ENCODE measurements at regions of chr21 and their contacts with region 1.

Region 1: GRCh38 chr21:33199516-33200217 is 30.1 kb upstream of the IFNAR2 start:
- DNase-seq: no peak
- H3K4me3 ChIP-seq: peak overlapping the region in 1 of 8 donors; percentile 2
- H3K27ac ChIP-seq: peak overlapping the region in 7 of 8 donors; percentile 28 to 85 (median 73)
- H3K4me1 ChIP-seq: peaks cover 12 to 74% (median 34%) of the 10 kb centered on the region in 6 donors
- H3K27me3 ChIP-seq: no peaks in the 10 kb centered on the region
- CTCF ChIP-seq: peak; percentile 78 to 94 (median 91)
- POLR2A ChIP-seq: no peak

Region 2: GRCh38 chr21:32826329-32827167 is 373.1 kb before region 1 on chr21:
- intact Hi-C with region 1: loop called (anchors 5 kb)
- DNase-seq: no peak
- H3K4me3 ChIP-seq: no peak overlapping the region
- H3K27ac ChIP-seq: no peak overlapping the region
- H3K4me1 ChIP-seq: no peaks in the 10 kb centered on the region
- H3K27me3 ChIP-seq: peaks cover 0 to 9% (median 0%) of the 10 kb centered on the region in 7 donors
- CTCF ChIP-seq: peak; percentile 10 to 72 (median 44)
- POLR2A ChIP-seq: no peak

Region 3: GRCh38 chr21:32940079-32941014 is 259.3 kb before region 1 on chr21:
- intact Hi-C with region 1: loop called (anchors 5 kb)
- DNase-seq: no peak
- H3K4me3 ChIP-seq: no peak overlapping the region
- H3K27ac ChIP-seq: no peak overlapping the region
- H3K4me1 ChIP-seq: peaks cover 0 to 11% (median 0%) of the 10 kb centered on the region in 6 donors
- H3K27me3 ChIP-seq: peaks cover 0 to 17% (median 0%) of the 10 kb centered on the region in 7 donors
- CTCF ChIP-seq: peak; percentile 38 to 88 (median 71)
- POLR2A ChIP-seq: no peak

Region 4: GRCh38 chr21:33011462-33011861 is 188.2 kb before region 1 on chr21:
- intact Hi-C with region 1: no loop called
- DNase-seq: no peak
- H3K4me3 ChIP-seq: no peak overlapping the region
- H3K27ac ChIP-seq: peak overlapping the region in 2 of 8 donors; percentile 48 to 52
- H3K4me1 ChIP-seq: peaks cover 0 to 13% (median 0%) of the 10 kb centered on the region in 6 donors
- H3K27me3 ChIP-seq: peaks cover 0 to 51% (median 0%) of the 10 kb centered on the region in 7 donors
- CTCF ChIP-seq: no peak
- POLR2A ChIP-seq: no peak

Region 5: DNA sequence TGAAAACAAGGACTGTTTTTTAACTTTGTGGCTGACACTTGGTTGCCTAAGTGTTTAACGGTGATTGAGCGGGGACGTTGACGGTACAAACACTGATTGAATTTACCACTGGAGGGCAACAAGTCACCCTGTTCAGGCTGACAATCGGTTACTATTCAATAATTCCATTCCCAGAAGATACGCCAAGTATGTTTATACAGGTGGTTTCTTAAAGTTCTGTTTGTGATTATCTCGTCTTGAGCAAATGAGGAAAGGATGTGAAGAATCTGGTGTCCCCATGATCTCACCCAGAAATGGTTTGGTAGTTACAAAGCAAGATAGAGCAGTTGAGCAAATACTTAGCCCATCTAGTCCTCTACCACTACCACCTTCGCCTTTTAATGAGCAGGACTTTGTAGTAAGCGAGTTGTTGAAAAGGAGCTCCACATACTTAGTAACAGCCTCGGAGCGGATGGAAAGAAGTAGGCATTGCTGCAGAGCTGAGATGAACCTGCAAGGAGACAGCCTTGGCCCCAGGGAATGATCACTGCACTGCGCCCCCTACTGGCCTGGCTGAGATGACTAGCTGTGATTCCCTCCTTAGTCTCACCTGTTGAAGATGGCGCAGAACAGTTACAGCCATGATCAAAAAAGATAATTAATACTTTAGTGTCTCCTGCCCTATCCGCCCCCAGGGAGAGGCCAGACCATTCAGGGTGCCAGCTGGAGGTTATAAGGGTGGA is 161.4 kb after region 1 on chr21:
- intact Hi-C with region 1: loop called (anchors 10 kb)
- DNase-seq: peak; percentile 93
- H3K4me3 ChIP-seq: peak overlapping the region in 6 of 8 donors; percentile 8 to 60 (median 28)
- H3K27ac ChIP-seq: peak overlapping the region; percentile 61 to 95 (median 88)
- H3K4me1 ChIP-seq: peaks cover 20 to 64% (median 30%) of the 10 kb centered on the region in 6 donors
- H3K27me3 ChIP-seq: no peaks in the 10 kb centered on the region
- CTCF ChIP-seq: peak; percentile 63 to 94 (median 85)
- POLR2A ChIP-seq: no peak

Region 6: DNA sequence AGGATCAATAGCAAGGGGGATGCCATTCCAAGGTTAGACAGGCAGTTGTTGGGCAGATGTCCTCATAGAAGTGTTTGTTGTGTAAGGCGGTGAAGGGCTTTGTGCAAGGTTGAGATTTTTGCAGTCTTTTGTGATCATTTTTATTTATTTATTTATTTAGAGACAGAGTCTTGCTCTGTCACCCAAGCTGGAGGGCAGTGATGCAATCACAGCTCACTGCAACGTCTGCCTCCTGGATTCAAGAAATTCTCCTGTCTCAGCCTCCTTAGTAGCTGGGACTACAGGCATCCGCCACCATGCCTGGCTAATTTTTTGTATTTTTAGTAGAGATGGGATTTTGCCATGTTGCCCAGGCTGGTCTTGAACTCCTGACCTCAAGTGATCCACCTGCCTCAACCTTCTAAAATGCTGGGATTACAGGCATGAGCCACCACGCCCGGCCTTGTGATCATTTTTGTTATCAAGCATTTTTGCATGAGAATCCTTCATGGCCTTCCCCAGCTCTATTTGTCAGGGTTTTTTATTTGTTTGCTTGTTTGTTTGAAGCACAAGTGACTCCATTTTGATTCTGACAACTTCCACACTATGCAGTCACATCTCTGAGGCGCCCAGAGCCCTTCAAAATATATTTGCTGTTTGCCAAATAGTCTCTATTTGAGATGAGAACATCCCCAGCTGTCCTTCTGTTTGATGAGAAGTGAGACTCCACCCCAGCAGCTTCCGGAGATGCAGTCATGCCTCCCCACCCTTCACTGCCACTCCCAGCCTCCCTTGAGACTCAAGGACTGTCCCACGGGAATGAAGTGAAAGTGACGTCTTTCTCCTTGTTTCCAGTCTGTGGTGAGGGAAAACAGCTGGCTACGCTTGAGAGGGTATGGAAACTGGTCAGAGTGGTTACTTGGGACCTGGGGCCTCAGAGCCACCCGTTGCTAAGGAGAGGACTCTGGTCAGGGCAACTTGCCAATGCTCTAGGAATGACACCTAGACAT is 242.1 kb after region 1 on chr21:
- intact Hi-C with region 1: loop called (anchors 2 kb)
- DNase-seq: peak; percentile 78
- H3K4me3 ChIP-seq: no peak overlapping the region
- H3K27ac ChIP-seq: peak overlapping the region; percentile 42 to 80 (median 72)
- H3K4me1 ChIP-seq: peaks cover 7 to 50% (median 30%) of the 10 kb centered on the region in 6 donors
- H3K27me3 ChIP-seq: no peaks in the 10 kb centered on the region
- CTCF ChIP-seq: no peak
- POLR2A ChIP-seq: no peak

Measured in spleen (tissue), 13 donors.